Posterior vena cava (tissue), 2 donors: ENCODE measurements at regions of chr10 and their contacts with region 1.

Region 1: GRCh38 chr10:24998044-24998443 is 17.9 kb downstream of the ENKUR start:
- DNase-seq: no peak

Region 2: GRCh38 chr10:24744946-24745345 is 253.1 kb before region 1 on chr10:
- intact Hi-C with region 1: loop called in 1 of 2 experiments (anchors 2 kb)
- DNase-seq: no peak

Region 3: GRCh38 chr10:25382029-25382810 is 384.2 kb after region 1 on chr10:
- intact Hi-C with region 1: no loop called
- DNase-seq: no peak